ENCODE measurements at regions of chr6 and their contacts with region 1.

Region 1: DNA sequence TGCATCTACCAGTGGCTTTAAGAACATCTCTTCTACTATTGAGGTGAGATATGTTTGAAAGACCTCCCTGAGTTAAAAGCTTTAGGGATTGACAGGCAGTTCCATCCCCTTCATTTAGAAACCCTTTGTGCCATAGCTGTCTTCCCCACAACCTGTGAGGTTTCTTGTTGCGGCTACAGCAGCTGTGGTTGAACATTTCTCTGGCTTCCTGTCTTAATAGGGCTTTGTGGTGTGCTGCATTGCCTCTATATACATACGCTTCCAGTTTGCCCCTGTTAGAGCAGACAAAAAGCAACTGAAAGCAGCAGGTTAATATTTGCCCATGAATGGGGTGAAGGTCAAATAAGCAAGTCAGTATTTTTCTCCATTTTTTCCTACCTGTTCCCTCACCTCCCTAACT is 210.2 kb downstream of the TMEM200A start:
- DNase-seq: peak; percentile 77
- ATAC-seq: peak; percentile 91
- H3K4me3 Mint-ChIP-seq: peak overlapping the region; percentile 70
- H3K27ac Mint-ChIP-seq: peak overlapping the region; percentile 86
- H3K4me1 Mint-ChIP-seq: peaks cover 32% of the 10 kb centered on the region
- H3K27me3 Mint-ChIP-seq: no peaks in the 10 kb centered on the region

Region 2: DNA sequence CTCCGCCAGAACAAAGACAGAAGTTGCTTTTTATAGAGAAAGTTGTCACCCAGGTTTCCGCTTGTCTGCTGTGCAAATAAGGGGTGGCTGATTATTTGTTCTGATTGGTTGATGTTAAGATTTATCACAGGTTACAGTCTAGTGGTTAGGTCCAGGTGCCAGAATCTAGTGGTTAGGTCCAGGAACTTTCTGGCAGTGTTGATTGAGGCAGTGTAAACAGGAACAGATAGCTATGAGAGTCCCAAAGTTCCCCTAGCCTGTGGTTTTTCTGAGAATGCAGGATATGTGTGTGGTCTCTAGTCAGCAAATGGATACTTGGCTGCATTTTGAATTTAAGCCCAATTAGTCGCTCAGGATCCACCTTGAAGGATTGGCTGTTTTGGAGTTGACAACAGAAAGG is 62.2 kb before region 1 on chr6:
- POLR2A ChIA-PET with region 1: interaction called, 22 read pairs
- DNase-seq: no peak
- ATAC-seq: peak; percentile 97
- H3K4me3 Mint-ChIP-seq: peak overlapping the region; percentile 47
- H3K27ac Mint-ChIP-seq: peak overlapping the region; percentile 93
- H3K4me1 Mint-ChIP-seq: peaks cover 45% of the 10 kb centered on the region
- H3K27me3 Mint-ChIP-seq: peaks cover 2% of the 10 kb centered on the region

Region 3: DNA sequence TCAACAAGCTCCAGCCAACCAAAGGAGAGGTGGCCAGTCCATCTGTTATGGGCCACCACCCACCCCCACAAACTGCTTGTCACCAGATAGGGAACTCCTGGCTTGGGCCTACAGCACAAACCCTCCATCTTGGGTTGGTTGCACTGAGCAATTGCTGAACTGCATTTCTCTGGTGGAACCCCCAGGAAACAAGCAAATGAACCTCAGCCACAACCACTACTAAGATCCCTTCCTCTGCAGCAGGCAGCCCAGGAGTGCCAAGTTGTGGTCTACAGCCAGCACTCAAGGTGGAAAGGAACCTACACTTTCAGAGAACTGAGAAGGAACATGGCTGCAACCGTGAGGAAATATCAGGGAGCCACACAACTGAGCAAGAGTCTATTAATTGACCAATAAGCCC is 38.5 kb before region 1 on chr6:
- POLR2A ChIA-PET with region 1: interaction called, 10 read pairs
- DNase-seq: peak; percentile 45
- ATAC-seq: peak; percentile 97
- H3K4me3 Mint-ChIP-seq: peak overlapping the region; percentile 2
- H3K27ac Mint-ChIP-seq: peak overlapping the region; percentile 88
- H3K4me1 Mint-ChIP-seq: peaks cover 14% of the 10 kb centered on the region
- H3K27me3 Mint-ChIP-seq: peaks cover 3% of the 10 kb centered on the region